ENCODE measurements at regions of chr5 and their contacts with region 1.

Region 1: GRCh38 chr5:134527146-134527960 is 1.9 kb downstream of the JADE2 start:
- DNase-seq: peak; percentile 66 to 80 (median 70)
- H3K4me3 ChIP-seq: peak overlapping the region; percentile 90
- H3K4me3 Mint-ChIP-seq: peak overlapping the region; percentile 94 to 99 (median 98)
- H3K27ac ChIP-seq: peak overlapping the region; percentile 84
- H3K27ac Mint-ChIP-seq: peak overlapping the region; percentile 80 to 99 (median 88)
- H3K4me1 ChIP-seq: peaks cover 56% of the 10 kb centered on the region
- H3K4me1 Mint-ChIP-seq: peaks cover 52 to 61% (median 56%) of the 10 kb centered on the region in 3 donors
- H3K27me3 ChIP-seq: no peaks in the 10 kb centered on the region
- H3K27me3 Mint-ChIP-seq: peaks cover 0 to 7% of the 10 kb centered on the region in 2 donors

Region 2: GRCh38 chr5:134349463-134349862 is 177.9 kb before region 1 on chr5:
- CTCF ChIA-PET with region 1: no interaction called
- POLR2A ChIA-PET with region 1: no interaction called
- DNase-seq: no peak
- H3K4me3 ChIP-seq: no peak overlapping the region
- H3K4me3 Mint-ChIP-seq: no peak overlapping the region
- H3K27ac ChIP-seq: no peak overlapping the region
- H3K27ac Mint-ChIP-seq: no peak overlapping the region
- H3K4me1 ChIP-seq: no peaks in the 10 kb centered on the region
- H3K4me1 Mint-ChIP-seq: no peaks in the 10 kb centered on the region
- H3K27me3 ChIP-seq: no peaks in the 10 kb centered on the region
- H3K27me3 Mint-ChIP-seq: no peaks in the 10 kb centered on the region

Region 3: DNA sequence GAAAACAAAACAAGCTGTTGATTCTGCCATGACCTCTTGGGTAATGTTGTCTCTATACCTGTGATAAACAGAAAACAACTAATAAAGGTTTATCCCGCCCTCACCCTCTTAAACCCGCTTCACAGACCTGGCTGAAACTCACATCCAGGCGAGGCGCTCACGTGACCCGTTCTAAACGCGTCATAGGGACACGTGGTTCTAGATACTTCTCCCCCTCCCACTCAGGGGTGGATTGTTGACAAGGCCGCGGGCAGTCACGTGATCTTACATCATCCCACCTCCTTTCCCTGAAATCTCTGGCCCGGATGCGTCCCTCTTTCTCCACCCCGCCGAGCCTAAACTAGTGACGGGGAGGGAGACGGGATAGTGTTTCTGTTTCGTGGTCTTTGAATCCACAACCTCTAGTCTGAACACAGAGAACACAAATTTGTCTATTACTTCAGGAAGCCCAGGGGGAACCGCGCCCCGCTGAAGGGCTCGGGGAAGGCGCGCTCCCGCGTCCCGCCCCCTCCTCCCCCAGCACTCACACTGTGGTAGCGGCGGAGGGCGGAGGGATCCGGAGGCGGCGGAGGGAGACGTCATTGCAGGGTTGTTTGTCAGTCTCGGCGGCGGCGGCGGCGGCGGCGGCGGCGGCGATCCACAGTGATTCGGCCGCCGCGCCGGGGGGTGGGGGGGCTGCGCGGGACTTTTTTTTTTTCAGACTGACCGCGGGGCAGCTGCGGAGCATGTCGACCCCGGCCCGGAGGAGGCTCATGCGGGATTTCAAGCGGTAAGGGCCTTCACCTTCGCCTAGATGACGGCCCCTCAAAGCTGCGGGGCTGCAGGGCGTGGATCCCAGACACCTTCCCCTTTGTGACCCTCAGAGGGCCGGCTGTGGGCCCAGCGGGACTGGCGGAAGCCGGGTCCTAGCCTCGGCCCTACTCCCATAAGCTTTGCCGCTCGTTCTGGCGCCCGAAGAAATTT is 156.2 kb before region 1 on chr5 and contains the start of gene UBE2B:
- CTCF ChIA-PET with region 1: interaction called, 10 read pairs
- POLR2A ChIA-PET with region 1: interaction called, 73 read pairs
- DNase-seq: peak; percentile 94 to 98 (median 97)
- H3K4me3 ChIP-seq: peak within 1 kb of the TSS; percentile 66
- H3K4me3 Mint-ChIP-seq: peak within 1 kb of the TSS; percentile 88 to 99 (median 98)
- H3K27ac ChIP-seq: peak within 1 kb of the TSS; percentile 100
- H3K27ac Mint-ChIP-seq: peak within 1 kb of the TSS; percentile 97 to 100 (median 100)
- H3K4me1 ChIP-seq: peaks cover 60% of the 10 kb centered on the region
- H3K4me1 Mint-ChIP-seq: peaks cover 46 to 70% (median 66%) of the 10 kb centered on the region in 3 donors
- H3K27me3 ChIP-seq: no peaks in the 10 kb centered on the region
- H3K27me3 Mint-ChIP-seq: peaks cover 0 to 10% of the 10 kb centered on the region in 2 donors
- total RNA-seq, gene UBE2B: 105 TPM

Region 4: GRCh38 chr5:134411546-134412266 is 115.6 kb before region 1 on chr5 and contains the start of gene CDKN2AIPNL:
- CTCF ChIA-PET with region 1: interaction called, 24 read pairs
- POLR2A ChIA-PET with region 1: interaction called, 67 read pairs
- DNase-seq: peak; percentile 78 to 92 (median 87)
- H3K4me3 ChIP-seq: peak within 1 kb of the TSS; percentile 90
- H3K4me3 Mint-ChIP-seq: peak within 1 kb of the TSS; percentile 91 to 97 (median 92)
- H3K27ac ChIP-seq: peak within 1 kb of the TSS; percentile 81
- H3K27ac Mint-ChIP-seq: peak within 1 kb of the TSS; percentile 75 to 98 (median 90)
- H3K4me1 ChIP-seq: peaks cover 27% of the 10 kb centered on the region
- H3K4me1 Mint-ChIP-seq: peaks cover 29 to 55% (median 49%) of the 10 kb centered on the region in 3 donors
- H3K27me3 ChIP-seq: no peaks in the 10 kb centered on the region
- H3K27me3 Mint-ChIP-seq: peaks cover 0 to 2% of the 10 kb centered on the region in 2 donors
- total RNA-seq, gene CDKN2AIPNL: 42.1 to 42.2 TPM

Region 5: GRCh38 chr5:134417707-134418106 is 109.6 kb before region 1 on chr5:
- CTCF ChIA-PET with region 1: interaction called, 14 read pairs
- POLR2A ChIA-PET with region 1: interaction called, 67 read pairs
- DNase-seq: no peak
- H3K4me3 ChIP-seq: no peak overlapping the region
- H3K4me3 Mint-ChIP-seq: no peak overlapping the region
- H3K27ac ChIP-seq: no peak overlapping the region
- H3K27ac Mint-ChIP-seq: peak overlapping the region in 1 of 8 donors; percentile 6
- H3K4me1 ChIP-seq: peaks cover under 1% of the 10 kb centered on the region
- H3K4me1 Mint-ChIP-seq: peaks cover 0 to 7% (median 6%) of the 10 kb centered on the region in 3 donors
- H3K27me3 ChIP-seq: no peaks in the 10 kb centered on the region
- H3K27me3 Mint-ChIP-seq: peaks cover 2 to 4% of the 10 kb centered on the region in 2 donors

Region 6: DNA sequence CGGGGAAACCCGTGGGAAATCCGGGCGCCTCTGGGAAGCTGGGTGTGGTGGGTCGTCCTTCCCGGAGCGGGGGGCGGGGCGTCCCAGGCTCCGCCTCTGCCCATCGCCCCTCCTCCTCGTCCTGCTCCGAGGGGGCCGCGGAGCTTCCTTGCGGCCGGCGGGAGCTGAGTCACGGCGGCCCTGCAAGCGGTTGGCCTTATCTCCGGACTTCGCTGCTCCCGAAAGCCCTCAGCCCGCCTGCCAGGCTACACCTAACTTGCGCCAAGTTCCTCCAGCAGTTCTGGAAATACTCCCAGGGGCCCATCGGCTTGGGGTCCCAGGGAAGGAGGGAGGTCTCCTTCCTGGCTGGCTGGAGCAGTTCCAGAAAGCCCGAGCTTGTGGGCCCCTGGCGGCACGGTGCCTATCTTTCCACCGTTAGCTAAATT is 61.5 kb before region 1 on chr5:
- CTCF ChIA-PET with region 1: interaction called, 5 read pairs
- POLR2A ChIA-PET with region 1: interaction called, 29 read pairs
- DNase-seq: peak; percentile 33 to 60 (median 46)
- H3K4me3 ChIP-seq: peak overlapping the region; percentile 67
- H3K4me3 Mint-ChIP-seq: peak overlapping the region; percentile 82 to 91 (median 85)
- H3K27ac ChIP-seq: peak overlapping the region; percentile 82
- H3K27ac Mint-ChIP-seq: peak overlapping the region; percentile 33 to 96 (median 84)
- H3K4me1 ChIP-seq: peaks cover 14% of the 10 kb centered on the region
- H3K4me1 Mint-ChIP-seq: peaks cover 6 to 29% (median 10%) of the 10 kb centered on the region in 3 donors
- H3K27me3 ChIP-seq: no peaks in the 10 kb centered on the region
- H3K27me3 Mint-ChIP-seq: no peaks in the 10 kb centered on the region

Region 7: GRCh38 chr5:134503088-134503946 is 24.0 kb before region 1 on chr5:
- CTCF ChIA-PET with region 1: interaction called, 6 read pairs
- POLR2A ChIA-PET with region 1: interaction called, 11 read pairs
- DNase-seq: peak in 4 of 5 donors; percentile 14 to 68 (median 24)
- H3K4me3 ChIP-seq: peak overlapping the region; percentile 1
- H3K4me3 Mint-ChIP-seq: peak overlapping the region in 5 of 7 donors; percentile 17 to 67 (median 55)
- H3K27ac ChIP-seq: no peak overlapping the region
- H3K27ac Mint-ChIP-seq: peak overlapping the region; percentile 23 to 97 (median 88)
- H3K4me1 ChIP-seq: peaks cover 19% of the 10 kb centered on the region
- H3K4me1 Mint-ChIP-seq: peaks cover 16 to 23% (median 17%) of the 10 kb centered on the region in 3 donors
- H3K27me3 ChIP-seq: no peaks in the 10 kb centered on the region
- H3K27me3 Mint-ChIP-seq: no peaks in the 10 kb centered on the region

Region 8: DNA sequence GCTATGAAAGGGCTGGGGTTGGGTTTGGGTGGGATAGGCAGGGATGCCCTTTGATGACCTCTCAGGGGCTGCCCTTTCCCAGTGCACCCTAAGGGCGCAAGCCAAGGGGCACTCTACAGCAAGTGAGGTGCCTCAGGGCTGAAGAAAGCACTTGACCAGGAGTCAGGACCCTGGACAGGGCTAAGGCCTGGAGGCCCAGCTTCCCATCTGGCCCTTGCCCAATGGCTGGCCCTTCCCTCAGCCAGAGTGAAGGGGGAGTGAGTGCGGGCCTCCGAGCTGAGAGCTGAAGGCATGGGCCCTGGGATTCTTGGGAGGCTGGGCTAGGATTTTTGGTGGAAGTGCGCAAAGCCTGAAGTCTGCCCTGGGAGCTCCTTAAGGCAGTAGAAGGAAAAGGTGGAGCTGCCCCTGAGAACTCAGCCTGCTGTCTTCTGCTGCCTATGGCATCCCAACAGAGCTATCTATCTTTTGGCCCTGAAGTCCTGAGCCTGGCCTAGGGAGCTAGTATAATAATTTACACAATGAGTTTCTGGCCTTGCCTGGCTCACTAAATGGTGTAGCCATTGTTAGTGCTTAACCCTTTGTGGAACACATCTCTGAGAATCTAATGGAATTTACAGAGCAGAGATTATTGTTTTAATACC is 14.5 kb after region 1 on chr5:
- CTCF ChIA-PET with region 1: interaction called, 13 read pairs
- POLR2A ChIA-PET with region 1: interaction called, 5 read pairs
- DNase-seq: peak in 1 of 5 donors; percentile 14
- H3K4me3 ChIP-seq: no peak overlapping the region
- H3K4me3 Mint-ChIP-seq: no peak overlapping the region
- H3K27ac ChIP-seq: no peak overlapping the region
- H3K27ac Mint-ChIP-seq: peak overlapping the region in 3 of 8 donors; percentile 7 to 71 (median 47)
- H3K4me1 ChIP-seq: peaks cover 31% of the 10 kb centered on the region
- H3K4me1 Mint-ChIP-seq: peaks cover 43 to 63% (median 44%) of the 10 kb centered on the region in 3 donors
- H3K27me3 ChIP-seq: no peaks in the 10 kb centered on the region
- H3K27me3 Mint-ChIP-seq: no peaks in the 10 kb centered on the region

Region 9: DNA sequence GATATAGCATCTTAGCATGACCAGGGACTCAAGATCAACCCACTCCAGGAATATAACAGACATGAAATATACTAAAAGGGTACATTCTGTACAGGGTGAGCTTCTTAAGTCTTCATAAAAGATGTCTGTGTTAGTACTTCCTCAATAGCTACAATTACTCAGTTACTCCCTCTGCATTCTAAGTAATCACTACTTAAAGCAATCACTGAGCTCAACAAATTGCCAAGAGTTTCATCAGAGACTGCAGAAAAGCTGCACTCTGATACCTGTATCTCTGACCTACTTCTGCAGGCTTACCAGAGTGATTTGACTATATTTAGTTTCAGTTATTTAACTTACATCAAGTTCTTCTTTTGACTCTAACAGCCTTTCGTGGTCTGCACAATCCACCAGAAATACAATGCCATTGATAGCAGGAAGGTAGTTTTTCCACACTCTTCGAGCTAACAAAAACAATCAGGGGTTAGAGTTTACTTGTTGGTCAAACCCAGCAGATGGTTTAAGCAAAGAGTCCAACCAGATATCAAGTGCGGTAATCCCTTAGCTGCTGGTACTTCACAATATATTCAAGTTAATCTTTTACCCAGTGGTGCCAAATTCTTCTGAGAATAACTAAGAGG is 82.0 kb after region 1 on chr5:
- CTCF ChIA-PET with region 1: no interaction called
- POLR2A ChIA-PET with region 1: no interaction called
- DNase-seq: no peak
- H3K4me3 ChIP-seq: no peak overlapping the region
- H3K4me3 Mint-ChIP-seq: no peak overlapping the region
- H3K27ac ChIP-seq: no peak overlapping the region
- H3K27ac Mint-ChIP-seq: peak overlapping the region in 6 of 8 donors; percentile 1 to 80 (median 48)
- H3K4me1 ChIP-seq: no peaks in the 10 kb centered on the region
- H3K4me1 Mint-ChIP-seq: peaks cover 0 to 9% (median 2%) of the 10 kb centered on the region in 3 donors
- H3K27me3 ChIP-seq: no peaks in the 10 kb centered on the region
- H3K27me3 Mint-ChIP-seq: no peaks in the 10 kb centered on the region

Region 10: DNA sequence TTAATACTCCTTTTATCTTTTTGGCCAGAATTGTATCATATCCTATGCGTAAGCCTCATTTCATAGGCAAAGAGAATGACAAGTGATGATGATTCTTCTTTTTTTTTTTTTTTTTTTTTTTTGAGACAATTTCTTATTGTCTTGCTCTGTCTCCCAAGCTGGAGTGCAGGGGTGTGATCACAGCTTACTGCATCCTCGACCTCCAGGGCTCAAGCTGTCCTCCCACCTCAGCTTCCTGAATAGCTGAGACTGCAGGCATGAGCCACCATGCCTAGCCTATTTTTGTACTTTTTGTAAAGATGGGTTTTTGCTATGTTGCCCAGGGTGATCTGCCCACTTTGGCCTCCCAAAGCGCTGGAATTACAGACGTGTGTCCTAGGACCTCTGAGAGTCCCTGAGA is 276.5 kb after region 1 on chr5:
- CTCF ChIA-PET with region 1: no interaction called
- POLR2A ChIA-PET with region 1: no interaction called
- DNase-seq: no peak
- H3K4me3 ChIP-seq: no peak overlapping the region
- H3K4me3 Mint-ChIP-seq: no peak overlapping the region
- H3K27ac ChIP-seq: no peak overlapping the region
- H3K27ac Mint-ChIP-seq: peak overlapping the region in 1 of 8 donors; percentile 52
- H3K4me1 ChIP-seq: no peaks in the 10 kb centered on the region
- H3K4me1 Mint-ChIP-seq: peaks cover 0 to 2% (median 0%) of the 10 kb centered on the region in 3 donors
- H3K27me3 ChIP-seq: no peaks in the 10 kb centered on the region
- H3K27me3 Mint-ChIP-seq: no peaks in the 10 kb centered on the region